Head of caudate nucleus (tissue), 42 donors: ENCODE measurements at regions of chr6 and their contacts with region 1.

Region 1: DNA sequence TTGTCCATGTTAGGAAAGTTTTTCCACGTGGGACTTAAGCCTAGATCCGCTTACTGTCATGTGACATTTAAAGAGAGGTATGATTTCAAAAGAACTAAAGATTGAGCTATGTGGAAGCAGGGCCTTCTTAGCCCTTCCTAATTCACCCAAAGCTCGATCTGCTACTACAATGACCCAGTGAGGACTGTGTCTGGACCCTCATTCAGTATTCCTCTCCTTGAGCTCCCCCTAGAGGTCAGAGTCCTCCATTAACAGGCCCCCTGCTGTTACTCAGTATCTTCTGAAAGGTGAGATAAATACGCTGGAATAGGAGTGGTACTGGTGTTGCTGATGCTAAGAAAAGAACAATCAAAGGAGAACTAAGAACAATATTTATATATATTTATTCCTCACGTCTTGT is 414.0 kb downstream of the GJA1 start:
- DNase-seq: peak in 24 of 42 donors; percentile 2 to 65 (median 34)

Region 2: DNA sequence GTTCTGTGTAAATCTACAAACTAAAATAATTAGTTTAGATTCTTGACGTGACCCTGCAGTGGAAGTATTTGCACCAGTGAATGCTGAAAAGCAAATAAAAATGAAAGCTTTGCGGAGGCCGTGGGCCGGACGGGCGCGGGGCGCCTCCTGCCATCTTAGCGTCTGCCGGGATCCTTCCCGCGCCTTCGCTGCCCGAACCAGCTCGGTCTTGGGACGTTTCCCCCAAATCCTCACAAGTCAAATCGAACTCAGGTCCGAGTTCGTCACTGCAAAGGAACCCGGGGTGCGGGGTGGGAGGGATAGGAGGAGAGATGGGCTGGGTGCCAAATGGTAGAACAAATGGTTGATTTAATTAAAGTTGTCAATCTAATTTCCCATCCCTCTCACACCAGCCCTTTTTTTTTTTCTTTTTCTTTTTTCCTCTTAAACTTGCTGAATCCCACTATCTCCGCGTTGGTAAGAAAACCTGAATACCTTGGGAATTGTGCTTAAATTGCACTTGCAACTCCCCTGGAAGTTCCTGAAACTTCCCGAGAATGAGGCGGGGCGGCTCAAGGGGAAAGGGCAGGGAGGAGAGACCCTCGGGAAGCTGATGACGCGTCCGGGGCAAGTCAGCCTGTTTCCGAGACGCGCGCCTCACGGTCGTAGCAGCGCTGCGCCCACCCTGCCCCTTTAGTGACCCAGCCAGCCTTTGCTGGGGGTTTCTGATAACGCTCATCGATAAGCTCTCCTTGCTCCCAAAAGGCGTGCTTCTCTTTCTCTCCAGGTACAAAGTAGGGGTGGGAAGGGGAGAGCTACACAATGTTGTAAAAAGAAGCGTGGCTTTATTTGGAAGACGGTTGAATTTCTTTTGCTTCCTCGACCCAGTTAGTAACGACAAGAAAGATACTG is 412.3 kb before region 1 on chr6:
- intact Hi-C with region 1: loop called (anchors 5 kb)
- DNase-seq: peak in 15 of 42 donors; percentile 6 to 61 (median 26)